ENCODE measurements at regions of chr13 and their contacts with region 1.

Region 1: GRCh38 chr13:35157143-35157755 is 215.2 kb downstream of the NBEA start:
- DNase-seq: peak; percentile 73
- H3K4me3 Mint-ChIP-seq: no peak overlapping the region
- H3K27ac Mint-ChIP-seq: no peak overlapping the region
- H3K4me1 Mint-ChIP-seq: no peaks in the 10 kb centered on the region
- H3K27me3 Mint-ChIP-seq: no peaks in the 10 kb centered on the region
- CTCF ChIP-seq: peak; percentile 57

Region 2: DNA sequence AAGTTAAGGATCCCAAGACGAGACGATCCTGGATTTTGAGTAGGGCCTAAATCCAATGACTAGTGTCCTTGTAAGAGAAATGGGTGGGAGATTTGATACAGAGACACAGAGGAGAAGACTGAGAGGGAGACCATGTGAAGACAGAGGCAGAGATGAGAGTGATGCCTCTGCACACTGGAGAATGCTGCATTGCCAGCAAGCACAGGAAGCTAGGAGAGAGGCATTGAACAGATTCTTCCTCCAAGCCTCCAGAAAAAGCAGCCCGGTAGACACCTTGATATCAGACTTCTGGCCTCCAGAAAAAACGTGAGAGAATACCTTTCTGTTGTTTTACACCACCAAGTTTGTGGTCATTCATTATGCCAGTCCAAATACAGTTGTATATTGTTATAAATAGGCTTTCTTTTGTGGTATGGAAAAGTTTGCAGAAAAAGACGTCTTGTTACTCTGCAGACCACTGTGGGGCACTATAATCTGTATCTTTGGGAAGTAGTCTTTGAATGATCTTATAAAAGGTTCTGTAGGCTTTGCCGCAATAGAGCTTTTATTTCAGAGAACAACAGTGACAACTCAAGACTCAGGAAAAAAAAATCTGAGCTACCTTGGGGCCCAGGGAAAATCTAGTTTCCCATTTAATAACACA is 1357.2 kb before region 1 on chr13:
- CTCF ChIA-PET with region 1: interaction called, 11 read pairs
- POLR2A ChIA-PET with region 1: no interaction called
- intact Hi-C with region 1: loop called (anchors 10 kb)
- DNase-seq: peak; percentile 18
- H3K4me3 Mint-ChIP-seq: no peak overlapping the region
- H3K27ac Mint-ChIP-seq: no peak overlapping the region
- H3K4me1 Mint-ChIP-seq: peaks cover 12% of the 10 kb centered on the region
- H3K27me3 Mint-ChIP-seq: no peaks in the 10 kb centered on the region
- CTCF ChIP-seq: peak; percentile 12

Region 3: DNA sequence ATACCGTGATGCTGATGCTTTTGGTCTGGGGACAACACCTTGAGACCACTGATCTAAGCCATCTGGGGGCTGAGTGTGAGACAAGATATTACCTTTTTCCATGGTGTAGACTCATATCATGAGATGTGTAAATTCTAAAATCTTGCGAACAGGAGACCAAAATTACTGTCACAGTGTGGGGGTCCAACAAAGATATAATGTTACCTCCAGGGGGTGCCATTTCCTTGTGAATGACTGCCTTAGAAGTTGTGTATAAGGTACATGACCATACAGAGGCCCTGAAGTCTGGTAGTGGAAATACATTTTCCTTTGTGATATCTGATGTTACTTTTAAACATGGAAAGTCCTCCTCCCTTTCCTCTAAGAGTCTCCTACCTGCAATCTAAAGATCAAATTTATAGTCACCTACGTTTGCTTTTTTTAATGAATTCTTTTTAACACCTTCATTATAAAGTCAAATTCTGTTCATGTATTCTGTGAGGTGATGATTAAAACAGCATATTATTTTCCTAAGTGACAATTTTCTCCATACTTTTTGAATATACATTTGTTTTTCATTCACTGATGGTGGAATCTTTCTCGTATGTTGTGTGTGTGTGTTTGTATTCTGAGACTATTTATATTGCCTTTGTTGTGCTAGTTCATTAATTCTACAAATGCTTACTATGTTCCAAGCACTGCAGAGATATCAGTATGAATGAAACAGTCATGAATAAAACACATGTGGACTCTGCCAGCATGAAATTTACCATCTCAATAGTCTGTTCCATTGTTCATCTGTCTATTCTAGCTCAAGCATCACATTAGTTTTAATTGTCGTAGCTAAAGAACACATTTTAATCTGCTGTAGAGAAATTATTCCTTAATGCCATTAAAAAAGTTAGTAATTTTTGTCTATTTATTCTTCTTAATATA is 1225.6 kb before region 1 on chr13:
- CTCF ChIA-PET with region 1: interaction called, 15 read pairs
- POLR2A ChIA-PET with region 1: no interaction called
- intact Hi-C with region 1: loop called (anchors 1 kb)
- DNase-seq: peak; percentile 71
- H3K4me3 Mint-ChIP-seq: no peak overlapping the region
- H3K27ac Mint-ChIP-seq: no peak overlapping the region
- H3K4me1 Mint-ChIP-seq: no peaks in the 10 kb centered on the region
- H3K27me3 Mint-ChIP-seq: no peaks in the 10 kb centered on the region
- CTCF ChIP-seq: peak; percentile 56

Region 4: DNA sequence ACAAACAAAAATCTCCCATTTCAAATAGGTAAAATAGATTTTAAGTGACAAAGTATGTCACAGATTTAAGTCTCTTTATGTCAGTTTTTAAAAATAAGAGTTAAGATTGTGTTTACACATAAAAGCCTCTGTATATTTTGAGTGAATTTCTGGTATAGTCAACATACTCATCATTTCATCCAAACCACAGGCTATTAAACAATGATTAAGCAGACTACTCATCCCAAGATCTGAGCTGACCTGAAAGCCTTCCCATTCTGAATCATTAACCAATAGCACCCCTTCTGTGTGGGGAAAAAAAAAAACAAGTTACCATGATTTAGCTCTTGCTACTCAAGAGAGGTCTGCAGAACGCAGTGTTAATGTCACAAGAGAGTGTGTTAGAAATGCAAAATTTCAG is 499.5 kb before region 1 on chr13:
- CTCF ChIA-PET with region 1: no interaction called
- POLR2A ChIA-PET with region 1: no interaction called
- intact Hi-C with region 1: no loop called
- DNase-seq: no peak
- H3K4me3 Mint-ChIP-seq: no peak overlapping the region
- H3K27ac Mint-ChIP-seq: no peak overlapping the region
- H3K4me1 Mint-ChIP-seq: no peaks in the 10 kb centered on the region
- H3K27me3 Mint-ChIP-seq: no peaks in the 10 kb centered on the region
- CTCF ChIP-seq: no peak

Measured in MCF 10A (cell line).